Activated CD8-positive, alpha-beta T cell treated with anti-CD3 and anti-CD28 coated beads, Interleukin-2, amount 10 ng/mL, durations not matched to agents 7 days and 5 days (primary cell): ENCODE measurements at regions of chr7 and their contacts with region 1.

Region 1: GRCh38 chr7:54758702-54759592 is at the start of gene SEC61G:
- DNase-seq: peak; percentile 97
- ATAC-seq: peak; percentile 98
- H3K4me3 Mint-ChIP-seq: peak within 1 kb of the TSS; percentile 100
- H3K27ac Mint-ChIP-seq: peak within 1 kb of the TSS; percentile 98
- H3K4me1 Mint-ChIP-seq: peaks cover 24% of the 10 kb centered on the region
- H3K27me3 Mint-ChIP-seq: peaks cover 14% of the 10 kb centered on the region
- total RNA-seq, gene SEC61G: 101 to 123 TPM

Region 2: DNA sequence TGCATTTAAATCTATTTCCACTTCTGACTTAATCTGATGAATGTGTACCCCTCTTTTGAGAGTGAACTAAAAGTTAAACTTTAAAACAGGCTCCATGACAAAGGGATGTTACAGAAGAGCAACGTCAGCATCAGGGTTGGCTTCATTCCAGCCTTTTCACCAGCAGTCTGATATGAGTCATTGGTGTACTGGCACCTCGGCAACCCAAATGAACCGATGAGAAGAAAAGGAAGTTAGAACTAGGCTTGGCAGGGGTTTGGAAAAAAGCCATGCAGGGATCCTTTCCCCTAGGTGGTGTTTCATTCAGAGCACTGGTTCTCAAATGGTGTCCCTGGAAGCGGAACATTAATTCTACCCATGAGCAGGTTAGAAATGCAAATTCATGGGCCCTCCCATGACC is 53.5 kb before region 1 on chr7:
- CTCF ChIA-PET with region 1: no interaction called
- POLR2A ChIA-PET with region 1: no interaction called
- DNase-seq: no peak
- ATAC-seq: no peak
- H3K4me3 Mint-ChIP-seq: no peak overlapping the region
- H3K27ac Mint-ChIP-seq: no peak overlapping the region
- H3K4me1 Mint-ChIP-seq: no peaks in the 10 kb centered on the region
- H3K27me3 Mint-ChIP-seq: no peaks in the 10 kb centered on the region

Region 3: GRCh38 chr7:54743580-54743979 is 15.4 kb before region 1 on chr7:
- CTCF ChIA-PET with region 1: interaction called, 13 read pairs
- POLR2A ChIA-PET with region 1: interaction called, 3 read pairs
- DNase-seq: no peak
- ATAC-seq: no peak
- H3K4me3 Mint-ChIP-seq: no peak overlapping the region
- H3K27ac Mint-ChIP-seq: no peak overlapping the region
- H3K4me1 Mint-ChIP-seq: no peaks in the 10 kb centered on the region
- H3K27me3 Mint-ChIP-seq: no peaks in the 10 kb centered on the region

Region 4: GRCh38 chr7:54773472-54774399 is 14.8 kb after region 1 on chr7:
- CTCF ChIA-PET with region 1: interaction called, 22 read pairs
- POLR2A ChIA-PET with region 1: interaction called, 9 read pairs
- DNase-seq: peak; percentile 72
- ATAC-seq: peak; percentile 75
- H3K4me3 Mint-ChIP-seq: peak overlapping the region; percentile 63
- H3K27ac Mint-ChIP-seq: no peak overlapping the region
- H3K4me1 Mint-ChIP-seq: peaks cover 3% of the 10 kb centered on the region
- H3K27me3 Mint-ChIP-seq: peaks cover 27% of the 10 kb centered on the region

Region 5: DNA sequence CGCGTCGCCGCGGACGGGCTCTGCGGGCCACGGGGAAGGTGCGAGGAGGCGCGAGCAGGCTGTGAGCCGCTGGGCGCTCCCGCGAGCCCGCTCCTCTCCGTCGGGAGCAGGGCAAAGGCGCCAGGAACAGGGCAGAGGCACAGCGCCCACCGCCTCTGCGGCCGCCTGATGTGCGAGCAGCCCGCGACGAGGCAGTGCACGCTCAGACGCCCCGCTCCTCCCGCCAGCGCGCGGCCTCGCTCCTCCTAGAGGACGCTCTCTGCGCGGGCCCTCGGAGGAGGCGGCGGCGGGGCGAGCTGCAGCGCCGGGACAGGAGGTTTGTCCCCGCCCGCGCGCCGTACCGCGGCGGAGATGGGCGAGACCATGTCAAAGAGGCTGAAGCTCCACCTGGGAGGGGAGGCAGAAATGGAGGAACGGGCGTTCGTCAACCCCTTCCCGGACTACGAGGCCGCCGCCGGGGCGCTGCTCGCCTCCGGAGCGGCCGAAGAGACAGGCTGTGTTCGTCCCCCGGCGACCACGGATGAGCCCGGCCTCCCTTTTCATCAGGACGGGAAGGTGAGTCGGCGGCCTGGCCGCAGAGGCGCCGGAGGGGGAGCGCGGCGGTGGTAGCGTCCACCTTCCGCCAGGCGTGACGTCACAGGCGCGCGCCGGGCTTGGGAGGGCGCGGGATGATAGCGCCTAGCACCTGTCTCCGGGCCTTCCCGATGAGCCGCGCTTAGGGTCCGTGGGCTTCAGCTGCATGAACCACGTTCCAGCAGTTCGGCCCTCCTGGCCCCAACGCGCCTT is 606.9 kb after region 1 on chr7:
- CTCF ChIA-PET with region 1: no interaction called
- POLR2A ChIA-PET with region 1: interaction called, 15 read pairs
- DNase-seq: peak; percentile 94
- ATAC-seq: peak; percentile 88
- H3K4me3 Mint-ChIP-seq: peak overlapping the region; percentile 92
- H3K27ac Mint-ChIP-seq: peak overlapping the region; percentile 98
- H3K4me1 Mint-ChIP-seq: peaks cover 34% of the 10 kb centered on the region
- H3K27me3 Mint-ChIP-seq: no peaks in the 10 kb centered on the region